BJ (cell line): ENCODE measurements at regions of chr3 and their contacts with region 1.

Region 1: GRCh38 chr3:197906023-197906849 is 43.8 kb upstream of the RPL35A start:
- DNase-seq: peak; percentile 89
- H3K4me3 ChIP-seq: no peak overlapping the region
- H3K27me3 ChIP-seq: no peaks in the 10 kb centered on the region
- CTCF ChIP-seq: peak; percentile 94

Region 2: DNA sequence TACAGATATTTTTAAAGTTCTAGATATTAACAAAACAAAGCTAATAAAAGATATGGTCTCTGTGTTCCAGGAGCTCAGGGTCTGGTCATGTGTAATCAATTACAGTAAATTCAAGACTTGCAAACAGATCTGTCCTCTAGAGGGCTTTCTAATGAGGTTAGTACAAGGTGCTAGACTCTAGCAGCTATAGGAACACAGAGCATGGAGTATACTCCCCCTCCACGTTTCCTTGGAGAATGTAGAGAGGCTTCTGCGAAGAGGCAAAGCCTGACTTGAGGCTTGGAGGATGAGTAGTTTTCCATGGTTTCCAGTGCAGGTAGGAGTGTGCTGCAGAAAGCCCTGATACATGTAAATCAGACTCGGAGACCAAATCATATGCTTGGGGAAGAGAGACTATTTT is 575.1 kb before region 1 on chr3:
- CTCF ChIA-PET with region 1: no interaction called
- POLR2A ChIA-PET with region 1: no interaction called
- DNase-seq: no peak
- H3K4me3 ChIP-seq: no peak overlapping the region
- H3K27me3 ChIP-seq: no peaks in the 10 kb centered on the region
- CTCF ChIP-seq: peak; percentile 30

Region 3: GRCh38 chr3:197394464-197395321 is 511.5 kb before region 1 on chr3:
- CTCF ChIA-PET with region 1: no interaction called
- POLR2A ChIA-PET with region 1: no interaction called
- DNase-seq: peak; percentile 82
- H3K4me3 ChIP-seq: no peak overlapping the region
- H3K27me3 ChIP-seq: peaks cover 17% of the 10 kb centered on the region
- CTCF ChIP-seq: no peak

Region 4: GRCh38 chr3:197749601-197750395 is 156.4 kb before region 1 on chr3 and contains the start of gene FYTTD1:
- CTCF ChIA-PET with region 1: no interaction called
- POLR2A ChIA-PET with region 1: interaction called, 20 read pairs
- DNase-seq: no peak
- H3K4me3 ChIP-seq: peak within 1 kb of the TSS; percentile 85
- H3K27me3 ChIP-seq: no peaks in the 10 kb centered on the region
- CTCF ChIP-seq: peak; percentile 48
- polyA plus RNA-seq, gene FYTTD1: 37.2 and 61.6 TPM in 2 replicates

Region 5: DNA sequence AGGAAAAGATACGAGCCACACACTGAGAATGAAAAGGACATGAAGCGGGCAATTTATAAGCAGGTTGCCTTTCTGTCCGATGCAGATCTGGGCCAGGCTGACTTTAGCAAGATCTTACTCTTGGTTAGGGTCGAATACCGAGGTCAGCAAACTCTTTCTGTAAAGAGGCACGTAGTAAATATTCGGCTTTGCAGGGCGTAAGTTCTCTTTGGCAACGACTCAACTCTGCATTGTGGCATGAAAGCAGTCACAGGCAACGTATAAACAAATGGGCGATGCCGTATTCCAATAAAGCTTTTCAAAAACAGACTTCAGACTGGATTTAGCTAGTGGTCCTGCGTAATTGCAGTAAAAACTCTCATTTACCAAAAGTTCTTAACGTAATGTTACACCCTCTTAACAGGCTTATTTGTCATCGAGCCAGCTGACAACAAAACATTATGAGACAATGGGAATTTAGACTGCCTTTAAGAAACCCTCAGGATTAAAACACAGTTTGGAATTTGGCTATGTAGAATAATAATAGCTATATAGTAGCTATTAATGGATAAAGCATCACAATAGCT is 30.7 kb after region 1 on chr3:
- CTCF ChIA-PET with region 1: interaction called, 54 read pairs
- POLR2A ChIA-PET with region 1: interaction called, 4 read pairs
- DNase-seq: no peak
- H3K4me3 ChIP-seq: no peak overlapping the region
- H3K27me3 ChIP-seq: no peaks in the 10 kb centered on the region
- CTCF ChIP-seq: no peak

Region 6: GRCh38 chr3:197942956-197943556 is 36.8 kb after region 1 on chr3:
- CTCF ChIA-PET with region 1: interaction called, 54 read pairs
- POLR2A ChIA-PET with region 1: no interaction called
- DNase-seq: no peak
- H3K4me3 ChIP-seq: no peak overlapping the region
- H3K27me3 ChIP-seq: no peaks in the 10 kb centered on the region
- CTCF ChIP-seq: peak; percentile 80

Region 7: DNA sequence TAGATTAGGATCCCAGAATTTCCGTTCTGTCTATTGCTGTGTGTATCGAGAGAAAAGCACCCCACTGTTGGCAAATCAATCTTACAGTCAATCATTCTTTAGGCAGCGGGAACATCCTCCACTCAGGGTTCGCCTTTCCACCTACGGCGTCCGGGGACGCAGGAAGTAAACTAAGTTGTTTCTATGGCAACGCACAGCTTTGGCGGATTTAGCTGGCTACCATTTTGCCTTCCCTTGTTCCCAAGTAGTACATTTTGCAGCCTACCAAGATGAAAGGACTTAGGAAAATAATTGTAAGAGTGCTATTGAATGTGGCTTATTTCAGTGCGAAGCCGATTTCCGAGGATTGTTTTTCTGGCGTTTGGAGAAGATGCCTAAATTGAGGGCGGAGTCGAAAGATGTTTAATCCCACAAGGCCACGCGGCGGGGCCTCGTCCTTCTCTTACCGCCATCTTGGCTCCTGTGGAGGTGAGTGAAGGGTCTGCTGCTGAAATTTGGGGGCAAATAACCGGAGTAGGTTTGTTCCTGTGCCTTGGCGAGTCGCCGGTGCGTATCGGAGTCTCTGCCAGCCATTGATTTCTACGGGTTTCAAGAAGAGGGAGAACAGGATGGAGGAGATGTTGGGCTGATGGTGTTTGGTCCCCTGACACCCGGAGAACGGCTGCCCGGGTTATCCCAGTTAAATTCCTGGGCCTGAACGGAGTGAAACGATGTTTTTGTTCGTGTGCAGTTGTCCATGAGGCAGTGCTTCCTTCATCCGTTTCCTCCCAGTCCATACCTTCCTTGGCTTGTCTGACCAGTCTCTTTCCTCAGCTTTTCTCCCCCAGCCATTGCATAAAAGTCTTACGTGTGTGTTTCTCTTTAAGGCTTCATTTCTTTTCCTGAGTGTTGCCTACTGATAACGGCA is 43.8 kb after region 1 on chr3 and contains the start of gene RPL35A:
- CTCF ChIA-PET with region 1: interaction called, 10 read pairs
- POLR2A ChIA-PET with region 1: no interaction called
- DNase-seq: peak; percentile 86
- H3K4me3 ChIP-seq: peak within 1 kb of the TSS; percentile 73
- H3K27me3 ChIP-seq: no peaks in the 10 kb centered on the region
- CTCF ChIP-seq: no peak
- polyA plus RNA-seq, gene RPL35A: 507 and 1,233 TPM in 2 replicates